Breast epithelium (tissue), 4 donors: ENCODE measurements at regions of chr12 and their contacts with region 1.

Region 1: GRCh38 chr12:110846615-110847566 is at the start of gene CCDC63:
- DNase-seq: peak in 1 of 2 donors; percentile 57
- H3K4me3 ChIP-seq: peak within 1 kb of the TSS; percentile 18 to 62 (median 38)
- H3K27ac ChIP-seq: no peak within 1 kb of the TSS
- H3K4me1 ChIP-seq: peaks cover 0 to 6% of the 10 kb centered on the region in 2 donors
- H3K27me3 ChIP-seq: peaks cover 0 to 5% of the 10 kb centered on the region in 2 donors
- CTCF ChIP-seq: no peak
- POLR2A ChIP-seq: no peak
- total RNA-seq, gene CCDC63: not detected

Region 2: DNA sequence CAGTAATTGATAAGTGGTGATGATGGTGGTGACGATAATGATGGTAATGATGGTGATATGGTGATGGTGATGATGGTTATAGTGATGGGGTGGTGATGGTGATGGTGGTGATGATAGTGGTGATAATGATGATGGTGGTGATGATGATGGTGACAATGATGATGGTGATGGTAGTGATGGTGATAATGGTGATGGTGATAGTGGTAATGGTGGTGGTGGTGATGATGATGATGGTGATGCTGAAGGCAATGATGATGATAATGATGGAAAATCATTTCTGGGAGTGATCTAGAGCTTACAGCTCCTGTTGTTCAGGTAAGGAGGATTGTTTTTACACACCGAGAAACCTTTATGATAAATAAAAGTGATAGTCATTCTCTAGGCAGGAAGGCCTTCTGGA is 33.8 kb after region 1 on chr12:
- intact Hi-C with region 1: loop called (anchors 2 kb)
- DNase-seq: no peak
- H3K4me3 ChIP-seq: no peak overlapping the region
- H3K27ac ChIP-seq: no peak overlapping the region
- H3K4me1 ChIP-seq: no peaks in the 10 kb centered on the region
- H3K27me3 ChIP-seq: no peaks in the 10 kb centered on the region
- CTCF ChIP-seq: no peak
- POLR2A ChIP-seq: no peak

Region 3: GRCh38 chr12:110913119-110914056 is 66.5 kb after region 1 on chr12:
- intact Hi-C with region 1: no loop called
- DNase-seq: no peak
- H3K4me3 ChIP-seq: no peak overlapping the region
- H3K27ac ChIP-seq: no peak overlapping the region
- H3K4me1 ChIP-seq: no peaks in the 10 kb centered on the region
- H3K27me3 ChIP-seq: no peaks in the 10 kb centered on the region
- CTCF ChIP-seq: no peak
- POLR2A ChIP-seq: no peak